Posterior vena cava (tissue), 2 donors: ENCODE measurements at regions of chr19 and their contacts with region 1.

Region 1: DNA sequence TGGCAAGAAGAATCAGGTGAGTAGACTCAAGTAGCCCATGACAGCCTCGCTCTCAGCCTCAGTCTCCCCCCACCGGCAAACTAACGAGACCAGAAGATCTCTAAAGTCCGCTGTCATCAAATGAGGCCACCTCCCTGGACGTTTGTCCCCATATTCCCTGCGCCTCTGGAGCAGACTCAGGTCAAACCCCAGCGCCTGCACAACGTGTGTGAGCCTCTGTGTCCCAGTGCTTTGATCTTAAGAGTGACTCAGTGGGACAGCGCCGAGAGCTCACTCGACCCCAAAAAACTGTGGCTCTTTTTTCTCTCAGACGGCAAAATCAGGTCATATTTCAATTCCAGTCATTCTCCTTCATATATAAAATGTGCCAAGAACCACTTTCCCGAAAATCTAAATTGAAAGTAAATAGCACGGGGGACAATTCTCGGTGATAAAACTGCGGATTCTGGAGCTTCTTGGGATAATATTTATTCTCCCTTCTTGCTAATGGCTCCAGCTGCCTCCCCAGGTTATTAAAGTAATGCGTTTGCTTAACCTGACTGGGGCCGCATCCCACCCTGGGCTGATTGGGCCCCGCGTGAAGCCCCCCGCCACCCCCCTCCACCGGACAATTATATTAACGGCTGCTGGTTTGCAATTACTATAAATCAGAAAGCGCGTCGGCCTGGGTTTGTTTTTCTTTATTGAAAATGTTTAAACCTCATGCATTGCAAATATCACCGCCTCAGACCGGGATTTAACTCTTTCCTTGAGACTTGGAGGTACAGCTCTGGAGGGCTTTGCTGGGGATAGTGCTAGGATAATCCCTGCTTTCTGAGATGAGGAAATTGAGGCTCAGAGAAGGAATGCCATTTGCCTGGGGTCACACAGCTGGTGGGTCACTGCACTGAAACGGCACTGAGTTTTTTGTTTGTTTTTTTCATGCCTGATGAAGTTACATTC is 37.5 kb upstream of the ZNRF4 start:
- DNase-seq: no peak

Region 2: GRCh38 chr19:4993683-4994082 is 424.1 kb before region 1 on chr19:
- intact Hi-C with region 1: no loop called
- DNase-seq: no peak

Region 3: DNA sequence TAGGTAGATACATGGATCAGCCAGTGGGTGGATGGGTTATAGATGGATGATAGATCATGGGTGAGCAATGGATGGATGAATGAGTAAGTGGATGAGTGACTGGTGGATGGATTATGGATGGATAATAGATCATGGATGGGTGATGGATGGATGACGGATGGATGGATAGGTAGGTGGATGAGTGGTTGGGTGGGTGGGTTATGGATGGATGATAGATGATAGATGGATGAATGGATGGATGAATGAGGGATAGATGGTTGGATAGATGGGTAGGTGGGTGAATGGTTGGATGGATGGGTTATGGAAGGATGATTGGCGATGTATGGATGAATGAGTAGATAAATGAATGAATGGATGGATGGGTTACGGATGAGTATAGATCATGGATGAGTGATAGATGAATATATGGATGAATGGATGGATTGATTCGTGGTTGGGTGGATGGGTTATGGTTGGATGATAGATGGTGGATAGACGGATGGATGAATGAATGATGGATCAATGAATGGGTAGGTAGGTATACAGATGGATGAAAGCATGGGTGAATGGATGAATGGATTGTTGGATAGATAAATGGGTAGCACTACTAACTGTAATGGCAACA is 50.1 kb before region 1 on chr19:
- intact Hi-C with region 1: loop called in 1 of 2 experiments (anchors 1 kb)
- DNase-seq: no peak